ENCODE measurements at regions of chr16 and their contacts with region 1.

Region 1: DNA sequence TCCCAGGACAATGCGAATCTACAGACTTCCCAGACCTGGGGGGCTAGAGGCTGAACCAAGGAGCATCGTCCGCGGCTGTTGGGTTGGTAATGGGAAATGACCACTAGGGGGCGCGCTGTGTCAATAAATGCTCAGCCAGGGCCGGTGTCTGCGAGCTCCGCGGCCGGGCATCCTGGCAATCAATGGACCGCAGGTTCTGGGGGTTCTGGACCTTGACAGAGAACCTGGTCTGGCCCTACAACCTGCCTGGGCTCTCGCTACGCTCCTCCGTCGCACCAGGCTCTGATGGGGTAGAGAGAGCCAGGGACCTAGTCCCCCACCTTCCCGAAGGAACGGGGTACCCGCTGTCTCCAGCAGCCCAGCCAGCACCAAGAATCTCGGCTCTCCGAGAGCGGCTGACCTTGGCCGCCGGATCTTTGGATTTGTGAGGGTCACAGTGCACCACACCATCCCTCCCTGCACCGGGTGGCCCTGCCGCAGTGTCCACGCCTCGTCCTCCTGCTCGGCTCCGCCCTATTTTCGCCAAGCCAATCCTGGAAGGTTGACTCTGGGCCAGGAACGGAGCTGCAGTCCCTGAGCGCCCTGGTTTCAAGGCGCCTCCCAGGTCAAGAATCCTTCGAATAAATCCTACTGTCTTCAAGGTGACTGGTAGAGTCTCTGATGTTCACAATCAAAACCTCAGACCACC is 20.4 kb upstream of the BEAN1 start:
- DNase-seq: peak; percentile 69
- ATAC-seq: peak; percentile 66
- H3K4me3 ChIP-seq: peak overlapping the region; percentile 79
- H3K27ac ChIP-seq: peak overlapping the region; percentile 41
- H3K4me1 ChIP-seq: peaks cover 27% of the 10 kb centered on the region
- H3K27me3 ChIP-seq: no peaks in the 10 kb centered on the region
- CTCF ChIP-seq: peak; percentile 76

Region 2: GRCh38 chr16:66326991-66327513 is 79.6 kb before region 1 on chr16:
- CTCF ChIA-PET with region 1: no interaction called
- POLR2A ChIA-PET with region 1: no interaction called
- intact Hi-C with region 1: no loop called
- DNase-seq: no peak
- ATAC-seq: no peak
- H3K4me3 ChIP-seq: no peak overlapping the region
- H3K27ac ChIP-seq: no peak overlapping the region
- H3K4me1 ChIP-seq: no peaks in the 10 kb centered on the region
- H3K27me3 ChIP-seq: no peaks in the 10 kb centered on the region
- CTCF ChIP-seq: no peak

Region 3: DNA sequence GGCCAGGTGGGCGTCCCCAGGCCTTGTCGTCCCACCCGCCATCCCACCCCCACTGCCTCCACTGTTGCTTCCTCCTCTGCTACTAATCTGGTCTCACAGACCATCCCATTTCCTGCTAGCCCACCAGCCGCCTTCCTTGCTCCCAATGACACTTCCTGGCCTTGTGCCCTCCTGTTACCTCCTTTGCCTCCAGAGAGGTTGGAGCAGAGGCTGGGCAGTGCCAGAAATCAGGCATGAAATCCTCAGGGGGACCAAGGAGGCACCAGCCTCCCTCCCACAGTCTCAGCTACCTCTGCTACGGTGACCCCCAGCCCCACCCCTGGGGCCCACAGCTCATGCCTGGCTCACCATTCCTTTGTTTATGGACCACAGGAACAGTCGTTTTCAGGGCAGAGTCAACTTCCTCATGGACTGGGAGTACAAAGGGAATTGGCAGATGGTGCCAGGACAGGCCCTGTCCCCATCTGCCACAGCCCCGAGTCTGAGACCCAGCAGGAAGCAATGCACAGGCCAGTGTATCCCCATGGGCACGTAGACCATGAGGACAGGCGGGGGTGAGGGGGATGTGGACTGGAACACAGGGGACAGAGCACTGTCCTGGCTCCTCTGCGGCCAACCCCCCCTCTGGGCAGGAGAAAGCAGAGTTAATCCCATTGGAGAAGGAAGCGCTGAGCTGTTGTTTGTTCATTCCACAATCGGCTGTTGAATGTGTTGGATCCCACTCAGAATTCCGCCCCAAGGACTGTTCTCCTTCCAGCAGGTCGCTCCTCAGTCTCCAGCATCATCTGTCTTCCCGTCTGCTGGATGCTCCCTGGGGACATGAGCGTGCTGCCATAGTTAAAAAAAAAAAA is 42.3 kb before region 1 on chr16:
- CTCF ChIA-PET with region 1: interaction called, 13 read pairs
- POLR2A ChIA-PET with region 1: no interaction called
- intact Hi-C with region 1: no loop called
- DNase-seq: peak; percentile 53
- ATAC-seq: peak; percentile 61
- H3K4me3 ChIP-seq: no peak overlapping the region
- H3K27ac ChIP-seq: peak overlapping the region; percentile 87
- H3K4me1 ChIP-seq: peaks cover 27% of the 10 kb centered on the region
- H3K27me3 ChIP-seq: no peaks in the 10 kb centered on the region
- CTCF ChIP-seq: no peak

Region 4: GRCh38 chr16:66474750-66475199 is 68.1 kb after region 1 on chr16:
- CTCF ChIA-PET with region 1: no interaction called
- POLR2A ChIA-PET with region 1: no interaction called
- intact Hi-C with region 1: no loop called
- DNase-seq: peak; percentile 39
- ATAC-seq: no peak
- H3K4me3 ChIP-seq: no peak overlapping the region
- H3K27ac ChIP-seq: no peak overlapping the region
- H3K4me1 ChIP-seq: peaks cover 20% of the 10 kb centered on the region
- H3K27me3 ChIP-seq: no peaks in the 10 kb centered on the region
- CTCF ChIP-seq: no peak

Region 5: DNA sequence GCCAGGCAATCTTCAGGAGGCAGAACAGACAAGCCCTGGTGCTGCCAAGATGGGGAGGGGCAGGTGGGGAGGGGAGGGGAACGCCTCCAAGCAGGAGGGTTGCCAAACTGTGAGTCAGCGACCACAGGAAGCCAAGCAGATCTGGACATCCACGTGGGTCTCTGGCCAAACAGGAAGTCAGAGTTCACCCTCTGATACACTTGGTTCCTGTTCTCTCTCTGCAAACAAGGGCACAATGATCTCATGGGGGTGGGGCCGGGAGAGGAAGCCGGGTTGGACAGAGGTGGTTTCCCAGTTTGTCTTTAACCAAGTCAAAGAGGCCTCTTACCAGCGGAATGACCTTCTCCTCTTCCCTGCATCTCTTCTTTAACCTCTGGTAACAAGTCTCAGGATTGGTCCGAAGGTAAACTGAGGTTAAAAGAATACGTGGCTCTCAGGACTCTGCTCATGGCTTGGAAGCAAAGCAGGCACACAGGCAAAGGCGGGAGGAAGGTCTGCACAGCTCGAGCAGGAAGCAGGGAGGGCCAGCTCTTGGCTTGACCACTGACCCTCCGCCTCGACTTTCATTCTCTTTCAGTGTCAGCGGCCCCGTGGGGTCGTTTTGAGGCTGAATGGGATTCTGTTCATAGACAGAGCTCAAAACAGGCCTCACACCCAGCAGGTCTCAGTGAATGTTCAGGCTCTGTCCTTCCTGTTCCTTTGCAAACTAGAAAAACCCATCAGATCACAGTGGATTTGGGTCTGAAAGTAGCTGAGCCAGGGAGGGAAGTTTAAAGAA is 110.3 kb after region 1 on chr16:
- CTCF ChIA-PET with region 1: no interaction called
- POLR2A ChIA-PET with region 1: no interaction called
- intact Hi-C with region 1: loop called (anchors 2 kb)
- DNase-seq: peak; percentile 95
- ATAC-seq: peak; percentile 74
- H3K4me3 ChIP-seq: 0 out of 2 replicates have a peak overlapping the region, but pooled peaks have one; percentile 6
- H3K27ac ChIP-seq: peak overlapping the region; percentile 77
- H3K4me1 ChIP-seq: peaks cover 47% of the 10 kb centered on the region
- H3K27me3 ChIP-seq: no peaks in the 10 kb centered on the region
- CTCF ChIP-seq: no peak